ENCODE measurements at regions of chr4 and their contacts with region 1.

Region 1: GRCh38 chr4:94127707-94128328 is 79.8 kb upstream of the SMARCAD1 start:
- DNase-seq: no peak
- ATAC-seq: peak; percentile 65; the same call in 1 of the 2 replicates
- H3K4me3 ChIP-seq: no peak overlapping the region
- H3K27ac ChIP-seq: no peak overlapping the region
- H3K4me1 ChIP-seq: no peaks in the 10 kb centered on the region
- H3K27me3 ChIP-seq: 0 out of 2 replicates have a peak, but pooled peaks cover 3% of the 10 kb centered on the region
- CTCF ChIP-seq: peak; percentile 58; the same call in 1 of the 2 replicates

Region 2: GRCh38 chr4:93897559-93897958 is 230.3 kb before region 1 on chr4:
- CTCF ChIA-PET with region 1: no interaction called
- POLR2A ChIA-PET with region 1: no interaction called
- in situ Hi-C with region 1: no loop called
- intact Hi-C with region 1: loop called (anchors 2 kb)
- DNase-seq: no peak
- ATAC-seq: no peak
- H3K4me3 ChIP-seq: no peak overlapping the region
- H3K27ac ChIP-seq: no peak overlapping the region
- H3K4me1 ChIP-seq: no peaks in the 10 kb centered on the region
- H3K27me3 ChIP-seq: no peaks in the 10 kb centered on the region
- CTCF ChIP-seq: peak; percentile 38; the same call in 1 of the 2 replicates

Region 3: DNA sequence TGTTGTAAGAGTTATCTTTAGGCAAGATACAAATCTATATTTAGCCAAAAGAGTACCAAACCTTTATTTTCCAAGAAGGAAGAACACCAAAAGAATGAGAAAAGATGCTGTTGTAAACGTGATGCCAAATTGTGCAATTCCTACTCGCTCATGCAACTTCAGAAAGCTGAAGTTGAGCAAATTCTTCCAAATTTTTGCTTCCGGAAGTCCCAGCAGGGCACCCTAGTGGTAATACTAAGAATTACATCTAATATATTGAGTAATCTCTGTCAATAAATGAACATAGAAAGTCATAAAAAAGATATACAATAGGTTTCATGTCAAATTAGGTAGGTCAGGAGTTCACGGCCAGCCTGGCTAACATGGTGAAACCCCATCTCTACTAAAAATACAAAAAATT is 43.8 kb after region 1 on chr4:
- CTCF ChIA-PET with region 1: no interaction called
- POLR2A ChIA-PET with region 1: no interaction called
- in situ Hi-C with region 1: no loop called
- intact Hi-C with region 1: no loop called
- DNase-seq: no peak
- ATAC-seq: no peak
- H3K4me3 ChIP-seq: no peak overlapping the region
- H3K27ac ChIP-seq: no peak overlapping the region
- H3K4me1 ChIP-seq: no peaks in the 10 kb centered on the region
- H3K27me3 ChIP-seq: no peaks in the 10 kb centered on the region
- CTCF ChIP-seq: peak; percentile 27; the same call in 1 of the 2 replicates